ENCODE measurements at regions of chr10 and their contacts with region 1.

Region 1: GRCh38 chr10:74255888-74256357 is 104.9 kb downstream of the ADK start:
- DNase-seq: no peak
- H3K4me3 ChIP-seq: no peak overlapping the region
- H3K27ac ChIP-seq: no peak overlapping the region
- H3K4me1 ChIP-seq: no peaks in the 10 kb centered on the region
- H3K27me3 ChIP-seq: no peaks in the 10 kb centered on the region
- CTCF ChIP-seq: no peak

Region 2: GRCh38 chr10:73413528-73414229 is 842.2 kb before region 1 on chr10 and contains the start of gene ANXA7:
- CTCF ChIA-PET with region 1: no interaction called
- dilution Hi-C with region 1: no loop called
- in situ Hi-C with region 1: no loop called
- intact Hi-C with region 1: no loop called
- DNase-seq: peak; percentile 89
- H3K4me3 ChIP-seq: peak within 1 kb of the TSS; percentile 51 to 100 (median 92)
- H3K27ac ChIP-seq: peak within 1 kb of the TSS; percentile 92
- H3K4me1 ChIP-seq: peaks cover 15% of the 10 kb centered on the region
- H3K27me3 ChIP-seq: no peaks in the 10 kb centered on the region
- CTCF ChIP-seq: peak in 1 of 2 donors; percentile 36
- total RNA-seq, gene ANXA7: 107 to 134 TPM

Region 3: GRCh38 chr10:74332398-74332797 is 76.5 kb after region 1 on chr10:
- CTCF ChIA-PET with region 1: interaction called, 26 read pairs
- dilution Hi-C with region 1: no loop called
- in situ Hi-C with region 1: no loop called
- intact Hi-C with region 1: no loop called
- DNase-seq: no peak
- H3K4me3 ChIP-seq: no peak overlapping the region
- H3K27ac ChIP-seq: no peak overlapping the region
- H3K4me1 ChIP-seq: peaks cover 5% of the 10 kb centered on the region
- H3K27me3 ChIP-seq: no peaks in the 10 kb centered on the region
- CTCF ChIP-seq: no peak